Sigmoid colon (tissue), 7 donors: ENCODE measurements at regions of chr11 and their contacts with region 1.

Region 1: DNA sequence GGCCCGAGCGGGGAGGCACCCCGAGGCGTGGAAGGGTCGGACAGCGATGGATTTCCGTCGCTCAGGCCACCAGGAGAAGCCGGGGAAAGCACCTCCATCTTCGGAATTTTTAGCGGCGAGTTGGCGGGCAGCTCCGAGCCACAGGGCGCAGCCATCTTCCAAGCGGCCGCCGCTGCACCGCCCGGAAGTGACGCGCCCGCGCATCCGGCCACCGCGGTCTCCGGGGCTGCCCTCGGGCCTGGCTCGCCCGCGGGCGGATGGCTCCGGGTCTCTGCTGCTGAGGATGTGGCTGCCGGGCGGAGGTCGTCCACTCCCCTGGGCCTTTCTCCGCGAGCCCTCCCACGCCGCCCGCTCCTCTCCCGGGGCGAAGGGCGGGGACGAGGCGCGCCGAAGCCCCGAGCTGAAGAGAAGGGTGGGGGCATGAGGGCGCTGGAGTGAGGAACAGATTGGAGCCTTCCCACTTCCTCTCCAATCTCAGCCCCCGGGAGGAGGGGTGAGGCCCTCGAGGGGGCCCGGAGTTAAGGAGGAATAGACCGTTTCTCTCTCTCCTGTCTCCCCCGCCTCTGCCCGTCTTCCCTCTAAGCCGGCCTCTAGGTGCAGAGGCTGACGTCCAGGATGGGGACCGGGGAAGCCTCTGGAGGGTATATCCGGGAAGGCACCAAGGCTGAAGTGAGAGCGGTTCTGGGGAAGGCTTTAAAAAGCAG is at the start of gene MSANTD2:
- DNase-seq: peak; percentile 91
- H3K4me3 ChIP-seq: peak within 1 kb of the TSS; percentile 63 to 96 (median 91)
- H3K27ac ChIP-seq: peak within 1 kb of the TSS; percentile 93 to 98 (median 97)
- H3K4me1 ChIP-seq: peaks cover 0 to 32% (median 28%) of the 10 kb centered on the region in 4 donors
- H3K27me3 ChIP-seq: no peaks in the 10 kb centered on the region
- CTCF ChIP-seq: no peak
- EP300 ChIP-seq: no peak
- POLR2A ChIP-seq: peak; percentile 60 to 68
- total RNA-seq, gene MSANTD2: 8.6 to 23.8 (median 16.0) TPM

Region 2: DNA sequence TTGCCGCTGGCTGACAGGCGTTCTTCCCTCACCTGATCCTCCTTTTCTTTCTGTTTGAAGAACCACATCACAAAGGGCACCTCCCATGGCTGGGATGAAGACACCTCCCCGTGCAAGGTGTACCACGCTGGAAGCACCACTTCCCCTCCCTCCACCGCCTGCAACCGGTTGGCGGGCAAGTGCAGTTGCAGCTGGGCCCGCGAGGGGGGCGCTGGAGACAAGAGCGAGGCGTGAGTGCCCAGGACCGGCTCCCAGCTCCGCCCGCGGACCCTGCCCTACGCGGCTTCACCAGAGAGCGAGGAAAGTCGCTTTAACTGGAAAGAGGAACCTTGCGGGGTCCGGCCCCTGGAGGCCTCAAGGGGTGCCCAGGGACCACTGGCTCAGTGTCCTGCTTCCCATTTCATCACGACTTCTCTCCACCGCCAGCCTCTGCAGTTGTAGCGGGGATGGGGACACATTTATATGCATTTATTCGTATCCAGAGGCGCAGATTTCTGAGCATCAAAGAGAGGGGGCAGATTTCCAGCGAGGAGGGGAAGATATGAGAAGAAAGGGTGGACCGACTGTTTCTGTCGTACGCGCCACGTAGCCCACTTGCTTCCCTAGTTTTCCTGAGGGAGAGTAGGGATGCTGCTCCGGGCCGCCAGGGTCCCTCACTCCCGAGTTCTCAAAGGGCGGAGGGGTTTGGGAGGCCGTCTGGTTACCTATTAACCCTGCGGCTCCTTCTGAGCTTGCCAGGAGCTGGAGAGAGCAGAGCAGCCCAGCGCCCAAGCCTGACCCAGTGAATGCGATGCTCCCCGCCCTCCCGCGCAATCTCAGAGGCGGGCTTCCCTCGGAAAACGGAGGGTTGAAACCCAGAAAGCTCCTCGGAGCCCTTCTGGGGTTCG is 41.8 kb before region 1 on chr11:
- intact Hi-C with region 1: loop called (anchors 2 kb)
- DNase-seq: peak; percentile 82
- H3K4me3 ChIP-seq: peak overlapping the region in 3 of 4 donors; percentile 25 to 44 (median 41)
- H3K27ac ChIP-seq: peak overlapping the region; percentile 17 to 76 (median 52)
- H3K4me1 ChIP-seq: peaks cover 0 to 47% (median 44%) of the 10 kb centered on the region in 4 donors
- H3K27me3 ChIP-seq: peaks cover 47 to 96% (median 72%) of the 10 kb centered on the region in 3 donors
- CTCF ChIP-seq: peak; percentile 31 to 75 (median 64)
- EP300 ChIP-seq: no peak
- POLR2A ChIP-seq: no peak

Region 3: DNA sequence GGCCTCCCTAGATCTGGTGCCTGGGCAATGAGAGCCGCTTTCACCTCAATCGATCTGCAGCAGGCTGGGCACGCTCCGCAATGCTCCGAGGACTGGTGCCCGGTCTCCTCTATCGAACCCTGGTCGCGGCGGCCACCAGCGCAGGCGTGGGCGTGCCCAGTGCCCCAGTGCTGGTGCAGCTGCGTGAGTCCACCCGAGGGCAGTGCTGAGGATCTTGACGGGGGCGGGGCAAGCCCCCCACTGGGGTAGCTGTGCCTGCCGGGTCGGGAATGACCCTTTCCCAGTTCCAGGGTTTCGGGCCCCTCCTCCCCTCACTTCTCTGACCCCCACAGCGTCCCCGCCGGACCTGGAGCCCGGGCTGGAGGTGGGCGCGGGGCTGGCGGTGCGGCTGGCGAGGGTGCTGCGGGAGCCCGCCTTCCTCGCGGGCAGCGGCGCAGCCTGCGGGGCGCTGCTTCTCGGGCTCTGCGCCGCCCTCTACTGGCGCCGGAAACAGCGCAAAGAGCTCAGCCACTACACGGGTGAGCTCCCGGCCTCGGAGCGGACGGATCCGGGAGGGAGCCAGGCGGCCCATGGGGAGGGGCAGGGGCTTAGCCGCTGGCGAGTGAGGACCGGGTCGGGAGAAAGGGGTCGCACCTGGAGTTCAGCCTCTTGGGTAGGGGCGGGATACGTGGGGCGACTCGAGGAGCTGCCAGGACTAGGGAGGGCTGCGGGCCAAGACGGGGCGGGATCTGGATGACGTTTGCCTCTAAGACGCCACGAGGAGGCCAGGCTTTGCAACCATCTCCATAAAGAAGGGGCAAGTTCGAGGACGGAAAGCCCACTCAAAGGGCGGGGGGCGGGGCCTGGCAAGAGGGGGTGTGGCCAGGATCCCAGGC is 75.8 kb after region 1 on chr11:
- intact Hi-C with region 1: loop called (anchors 2 kb)
- DNase-seq: peak; percentile 95
- H3K4me3 ChIP-seq: peak overlapping the region; percentile 47 to 66 (median 54)
- H3K27ac ChIP-seq: peak overlapping the region; percentile 88 to 92 (median 90)
- H3K4me1 ChIP-seq: peaks cover 0 to 21% (median 12%) of the 10 kb centered on the region in 4 donors
- H3K27me3 ChIP-seq: peaks cover 0 to 29% (median 21%) of the 10 kb centered on the region in 3 donors
- CTCF ChIP-seq: peak; percentile 44 to 71 (median 49)
- EP300 ChIP-seq: peak in 1 of 4 donors; percentile 28
- POLR2A ChIP-seq: no peak